ENCODE measurements at regions of chr16 and their contacts with region 1.

Region 1: DNA sequence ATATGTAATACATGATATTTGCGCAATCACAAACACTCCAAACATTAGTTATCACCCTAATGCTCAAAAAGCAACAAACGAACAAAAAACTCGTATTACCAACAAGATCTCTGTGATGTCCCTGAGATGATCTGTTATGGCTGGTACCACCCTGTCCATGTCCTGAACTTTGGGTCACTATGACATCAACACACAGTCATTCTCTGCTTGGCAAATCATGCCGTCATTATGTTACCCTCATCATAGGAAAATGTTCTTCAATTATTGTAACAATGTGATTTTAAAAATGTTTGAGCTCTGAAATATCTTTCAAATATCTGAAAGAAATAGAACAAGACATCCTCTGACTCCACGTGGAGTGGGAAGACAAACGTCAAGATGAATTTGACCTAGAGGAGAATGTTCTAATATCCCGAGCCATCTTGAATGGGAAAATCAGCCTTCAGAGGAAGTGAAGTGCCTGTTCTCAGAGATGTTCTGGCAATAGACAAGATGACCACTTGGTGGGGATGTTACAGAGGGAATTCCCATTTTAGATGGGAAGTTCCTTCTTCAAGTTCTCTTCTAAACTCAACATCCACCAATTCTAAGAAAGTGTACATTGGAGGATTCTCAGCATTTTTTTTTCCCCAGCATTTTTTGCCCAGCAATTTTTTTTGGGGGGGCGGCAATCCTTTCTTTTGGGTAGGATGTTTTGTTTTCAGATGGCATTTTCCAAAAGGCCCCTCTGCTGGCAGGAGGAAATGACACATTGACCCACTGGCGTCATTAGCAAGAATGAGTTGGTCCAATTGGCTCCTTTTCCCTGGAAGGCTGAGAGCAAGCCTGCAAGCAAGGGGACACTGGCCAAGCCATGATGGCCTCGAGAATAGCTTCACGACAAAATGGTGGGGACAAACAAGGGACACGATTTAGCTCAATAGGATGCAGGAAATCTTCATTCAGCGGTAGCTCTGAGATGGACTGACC is 3.7 kb upstream of the HSD17B2 start:
- DNase-seq: peak in 1 of 3 donors; percentile 70
- ATAC-seq: peak; percentile 20 to 40 (median 24)
- H3K4me3 ChIP-seq: no peak overlapping the region
- H3K27ac ChIP-seq: peak overlapping the region in 1 of 3 donors; percentile 42
- H3K4me1 ChIP-seq: peaks cover 0 to 39% (median 7%) of the 10 kb centered on the region in 4 donors
- H3K27me3 ChIP-seq: no peaks in the 10 kb centered on the region
- CTCF ChIP-seq: peak; percentile 60 to 76 (median 70)
- POLR2A ChIP-seq: no peak

Region 2: GRCh38 chr16:82082543-82083244 is 51.3 kb after region 1 on chr16:
- intact Hi-C with region 1: loop called in 1 of 2 experiments (anchors 10 kb)
- DNase-seq: no peak
- ATAC-seq: peak; percentile 53 to 72 (median 66)
- H3K4me3 ChIP-seq: peak overlapping the region in 2 of 3 donors; percentile 30 to 38
- H3K27ac ChIP-seq: peak overlapping the region; percentile 29 to 86 (median 82)
- H3K4me1 ChIP-seq: peaks cover 0 to 76% (median 26%) of the 10 kb centered on the region in 4 donors
- H3K27me3 ChIP-seq: no peaks in the 10 kb centered on the region
- CTCF ChIP-seq: no peak
- POLR2A ChIP-seq: no peak

Region 3: DNA sequence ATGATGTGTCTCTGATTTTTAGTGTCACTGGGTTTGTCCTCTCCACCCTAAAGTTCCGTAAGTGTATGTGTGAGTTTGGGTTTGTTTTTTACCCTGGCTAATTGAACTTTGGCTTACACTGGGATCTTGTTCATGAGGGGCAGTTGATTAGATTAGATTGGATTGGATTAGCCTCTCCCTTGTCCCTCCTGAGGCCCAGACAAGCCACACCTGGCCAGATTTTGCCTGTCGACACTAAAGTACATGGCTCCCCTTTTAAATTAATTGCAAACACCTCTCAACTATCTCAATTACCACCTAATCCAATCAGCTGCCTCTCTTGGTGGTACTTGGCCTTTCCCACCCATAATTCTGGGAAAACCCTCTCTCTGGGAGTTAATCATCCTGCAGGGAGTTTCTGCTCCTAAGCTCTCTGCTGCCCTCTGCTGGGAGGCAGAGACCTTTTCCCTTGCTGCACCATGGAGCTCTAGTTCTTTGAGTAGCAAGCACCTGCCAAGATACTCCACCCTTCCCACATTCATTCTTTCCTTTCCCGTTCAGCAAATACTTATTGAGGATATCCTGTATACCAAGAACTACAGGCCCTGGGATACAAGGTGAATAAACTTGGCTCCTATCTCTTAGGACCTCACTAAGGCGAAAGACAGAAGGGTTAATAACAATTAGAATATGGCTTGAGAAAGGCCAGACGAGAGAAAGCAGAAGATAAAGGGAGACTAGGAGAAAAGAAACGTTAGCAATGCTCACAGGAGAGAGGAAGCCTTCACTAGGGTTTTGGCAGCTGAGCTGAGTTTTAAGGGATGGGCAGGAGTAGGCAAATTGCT is 198.6 kb after region 1 on chr16:
- intact Hi-C with region 1: loop called in 1 of 2 experiments (anchors 5 kb)
- DNase-seq: peak; percentile 77 to 80 (median 79)
- ATAC-seq: peak; percentile 96 to 99 (median 96)
- H3K4me3 ChIP-seq: no peak overlapping the region
- H3K27ac ChIP-seq: no peak overlapping the region
- H3K4me1 ChIP-seq: no peaks in the 10 kb centered on the region
- H3K27me3 ChIP-seq: no peaks in the 10 kb centered on the region
- CTCF ChIP-seq: peak; percentile 84 to 96 (median 94)
- POLR2A ChIP-seq: no peak